PC-3 (cell line): ENCODE measurements at regions of chr5 and their contacts with region 1.

Region 1: GRCh38 chr5:26282190-26282589 is 756.2 kb downstream of the CDH9 start:
- DNase-seq: peak; percentile 87
- ATAC-seq: peak; percentile 90
- H3K4me3 ChIP-seq: no peak overlapping the region
- H3K27ac ChIP-seq: peak overlapping the region; percentile 95
- H3K4me1 ChIP-seq: peaks cover 31% of the 10 kb centered on the region
- H3K27me3 ChIP-seq: no peaks in the 10 kb centered on the region
- CTCF ChIP-seq: no peak

Region 2: GRCh38 chr5:26192496-26192895 is 89.7 kb before region 1 on chr5:
- CTCF ChIA-PET with region 1: no interaction called
- POLR2A ChIA-PET with region 1: no interaction called
- intact Hi-C with region 1: loop called (anchors 5 kb)
- DNase-seq: peak; percentile 81
- ATAC-seq: peak; percentile 88
- H3K4me3 ChIP-seq: no peak overlapping the region
- H3K27ac ChIP-seq: peak overlapping the region; percentile 30
- H3K4me1 ChIP-seq: peaks cover 7% of the 10 kb centered on the region; the same call in 1 of the 2 replicates
- H3K27me3 ChIP-seq: no peaks in the 10 kb centered on the region
- CTCF ChIP-seq: no peak

Region 3: DNA sequence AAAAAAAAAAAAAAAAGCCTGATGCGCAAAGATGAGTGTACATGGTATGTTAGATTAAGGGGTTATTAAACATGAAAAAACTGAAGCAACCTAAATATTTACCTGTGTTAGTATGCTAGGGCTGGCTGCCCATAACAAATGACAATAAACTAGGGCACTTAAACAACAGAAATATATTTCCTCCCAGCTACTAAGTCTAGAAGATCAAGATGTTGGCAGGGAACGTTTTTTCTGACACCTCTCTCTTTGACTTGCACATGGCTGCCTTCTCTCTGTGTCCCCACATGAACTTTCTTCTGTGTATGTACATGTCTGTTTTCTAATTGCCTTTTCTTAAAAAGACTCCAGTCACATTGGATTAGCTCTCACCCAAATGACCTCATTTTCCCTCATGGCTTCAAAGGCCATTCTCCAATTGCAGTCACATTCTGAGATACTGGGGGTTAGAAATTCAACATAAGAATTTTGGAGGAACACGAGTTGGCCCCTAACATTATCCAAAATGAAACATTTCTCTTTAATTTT is 61.7 kb after region 1 on chr5:
- CTCF ChIA-PET with region 1: no interaction called
- POLR2A ChIA-PET with region 1: no interaction called
- intact Hi-C with region 1: no loop called
- DNase-seq: no peak
- ATAC-seq: no peak
- H3K4me3 ChIP-seq: no peak overlapping the region
- H3K27ac ChIP-seq: no peak overlapping the region
- H3K4me1 ChIP-seq: no peaks in the 10 kb centered on the region
- H3K27me3 ChIP-seq: no peaks in the 10 kb centered on the region
- CTCF ChIP-seq: no peak